ENCODE measurements at regions of chr5 and their contacts with region 1.

Region 1: DNA sequence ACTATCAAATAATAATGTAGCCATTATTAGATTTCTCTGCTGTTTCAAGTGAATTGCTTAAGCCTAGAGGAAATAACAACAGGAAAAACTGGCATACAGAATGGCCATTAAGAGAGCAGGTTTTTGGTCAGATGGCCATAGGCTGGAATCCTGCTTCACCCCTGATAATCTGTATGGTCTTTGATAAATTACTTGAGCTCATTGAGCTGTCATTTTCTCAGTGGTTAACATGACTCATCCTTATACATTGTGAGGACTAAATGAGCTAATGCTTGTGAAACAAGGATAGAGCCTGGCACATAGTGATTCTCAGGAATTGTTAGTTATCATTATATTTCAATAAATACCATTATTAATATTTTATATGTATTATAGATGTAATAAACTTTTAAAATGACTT is 516.5 kb downstream of the KIF4B start:
- DNase-seq: no peak
- H3K4me3 ChIP-seq: no peak overlapping the region
- H3K27ac ChIP-seq: no peak overlapping the region
- H3K4me1 ChIP-seq: no peaks in the 10 kb centered on the region
- H3K27me3 ChIP-seq: no peaks in the 10 kb centered on the region
- CTCF ChIP-seq: no peak
- EP300 ChIP-seq: no peak
- POLR2A ChIP-seq: no peak

Region 2: DNA sequence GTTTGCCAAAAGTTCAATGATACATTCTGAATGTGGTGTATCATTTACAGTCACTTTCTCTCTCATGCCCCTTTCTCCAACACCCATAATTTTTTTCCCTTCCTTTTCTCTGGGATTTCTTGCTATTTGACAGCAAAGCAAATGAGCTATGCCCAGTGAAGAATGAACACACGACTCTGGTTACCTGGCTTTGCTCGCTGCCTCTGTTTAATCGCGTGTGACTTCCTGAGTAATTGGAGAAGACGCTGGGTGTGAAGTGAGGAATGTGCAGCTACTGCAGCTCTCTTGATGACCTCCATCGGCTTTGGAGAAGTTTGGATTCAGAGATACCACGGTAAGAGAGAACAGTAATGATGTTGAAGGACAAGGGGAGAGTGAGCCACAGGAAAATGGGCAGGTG is 135.3 kb after region 1 on chr5:
- intact Hi-C with region 1: no loop called
- DNase-seq: no peak
- H3K4me3 ChIP-seq: no peak overlapping the region
- H3K27ac ChIP-seq: no peak overlapping the region
- H3K4me1 ChIP-seq: no peaks in the 10 kb centered on the region
- H3K27me3 ChIP-seq: no peaks in the 10 kb centered on the region
- CTCF ChIP-seq: no peak
- EP300 ChIP-seq: no peak
- POLR2A ChIP-seq: no peak

Region 3: DNA sequence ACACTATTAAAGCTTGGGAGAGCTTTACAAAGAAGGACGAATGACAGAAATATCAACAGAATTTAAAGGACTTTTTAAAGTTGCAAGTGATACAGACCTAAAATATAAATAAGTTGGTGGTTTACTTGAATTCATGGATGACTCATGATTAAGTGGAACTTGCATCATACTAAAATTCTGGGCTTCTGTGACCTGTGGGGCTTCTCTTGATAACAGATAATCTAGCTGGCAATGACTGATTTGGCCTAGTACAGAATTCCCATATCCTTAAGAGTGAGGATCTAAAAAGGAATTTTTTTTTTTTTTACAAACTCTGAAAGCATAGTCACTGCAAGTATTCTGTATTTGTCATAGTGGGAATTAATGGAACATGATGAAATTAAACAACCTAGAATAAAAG is 253.2 kb after region 1 on chr5:
- intact Hi-C with region 1: loop called in 1 of 4 experiments (anchors 5 kb)
- DNase-seq: no peak
- H3K4me3 ChIP-seq: no peak overlapping the region
- H3K27ac ChIP-seq: no peak overlapping the region
- H3K4me1 ChIP-seq: no peaks in the 10 kb centered on the region
- H3K27me3 ChIP-seq: no peaks in the 10 kb centered on the region
- CTCF ChIP-seq: no peak
- EP300 ChIP-seq: no peak
- POLR2A ChIP-seq: no peak

Measured in ovary (tissue), 10 donors.